CD8-positive, alpha-beta T cell (primary cell): ENCODE measurements at regions of chr14 and their contacts with region 1.

Region 1: DNA sequence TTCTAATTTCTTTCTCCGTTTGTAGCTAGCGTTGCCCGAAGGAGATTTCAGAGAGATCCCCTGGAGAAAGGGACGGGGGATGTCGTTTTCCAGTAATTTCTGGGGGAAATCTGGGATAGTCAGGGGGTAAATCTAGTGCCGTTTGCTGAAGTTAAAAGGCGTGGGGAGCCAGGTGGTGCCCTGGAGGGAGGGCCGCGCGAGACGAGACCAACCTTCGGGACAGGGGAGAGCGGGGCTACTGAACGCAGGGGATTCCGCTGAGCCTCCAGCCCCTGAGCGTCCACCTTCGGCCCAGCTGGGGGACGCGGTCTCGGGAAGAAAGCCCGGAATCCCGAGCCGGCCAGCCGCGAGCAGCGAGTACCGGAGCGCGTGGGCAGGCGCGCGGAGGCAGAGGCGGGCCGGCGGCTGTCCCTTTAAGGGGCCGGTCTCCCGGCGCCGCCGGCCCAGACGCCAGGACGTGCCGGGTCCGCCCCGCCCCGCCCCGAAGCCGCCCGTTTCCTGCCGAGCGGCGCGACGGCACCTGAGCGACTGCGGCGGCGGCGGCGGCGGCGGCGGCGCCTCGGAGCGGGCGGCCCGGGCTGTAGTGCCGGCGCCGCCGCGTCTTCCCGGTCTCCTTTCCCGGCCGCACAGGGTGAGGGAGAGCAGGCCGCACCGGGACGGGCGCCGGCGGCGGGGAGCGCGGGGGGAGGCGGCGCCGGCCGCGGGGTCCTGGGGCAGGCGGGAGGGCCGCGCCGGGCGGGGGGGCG is at the start of gene KTN1:
- DNase-seq: peak; percentile 68 to 92 (median 84)
- ATAC-seq: peak; percentile 86
- H3K4me3 ChIP-seq: peak within 1 kb of the TSS; percentile 89 to 95
- H3K4me3 Mint-ChIP-seq: peak within 1 kb of the TSS; percentile 96
- H3K27ac ChIP-seq: peak within 1 kb of the TSS; percentile 77
- H3K27ac Mint-ChIP-seq: peak within 1 kb of the TSS; percentile 95
- H3K4me1 ChIP-seq: peaks cover 41% of the 10 kb centered on the region
- H3K4me1 Mint-ChIP-seq: peaks cover 30% of the 10 kb centered on the region
- H3K27me3 ChIP-seq: no peaks in the 10 kb centered on the region
- H3K27me3 Mint-ChIP-seq: no peaks in the 10 kb centered on the region
- CTCF ChIP-seq: no peak
- total RNA-seq, gene KTN1: 64.2 to 74.5 TPM

Region 2: GRCh38 chr14:54488646-54489317 is 1091.1 kb before region 1 on chr14 and contains the start of gene GMFB:
- CTCF ChIA-PET with region 1: no interaction called
- POLR2A ChIA-PET with region 1: no interaction called
- intact Hi-C with region 1: loop called in 1 of 2 experiments (anchors 5 kb)
- DNase-seq: peak; percentile 77 to 94 (median 89)
- ATAC-seq: peak; percentile 96
- H3K4me3 ChIP-seq: peak within 1 kb of the TSS; percentile 73 to 92
- H3K4me3 Mint-ChIP-seq: peak within 1 kb of the TSS; percentile 90
- H3K27ac ChIP-seq: peak within 1 kb of the TSS; percentile 66 to 89
- H3K27ac Mint-ChIP-seq: peak within 1 kb of the TSS; percentile 94
- H3K4me1 ChIP-seq: peaks cover 38% of the 10 kb centered on the region
- H3K4me1 Mint-ChIP-seq: peaks cover 61% of the 10 kb centered on the region
- H3K27me3 ChIP-seq: no peaks in the 10 kb centered on the region
- H3K27me3 Mint-ChIP-seq: no peaks in the 10 kb centered on the region
- CTCF ChIP-seq: peak; percentile 17
- total RNA-seq, gene GMFB: 33.7 to 34.0 TPM

Region 3: GRCh38 chr14:55026793-55027561 is 552.9 kb before region 1 on chr14 and contains the starts of genes SOCS4 and WDHD1:
- CTCF ChIA-PET with region 1: no interaction called
- POLR2A ChIA-PET with region 1: no interaction called
- intact Hi-C with region 1: loop called (anchors 5 to 10 kb)
- DNase-seq: peak; percentile 87 to 97 (median 94)
- ATAC-seq: peak; percentile 86
- H3K4me3 ChIP-seq: peak within 1 kb of the TSS; percentile 71 to 91
- H3K4me3 Mint-ChIP-seq: peak within 1 kb of the TSS; percentile 95
- H3K27ac ChIP-seq: peak within 1 kb of the TSS; percentile 80 to 95
- H3K27ac Mint-ChIP-seq: peak within 1 kb of the TSS; percentile 95
- H3K4me1 ChIP-seq: peaks cover 37% of the 10 kb centered on the region
- H3K4me1 Mint-ChIP-seq: peaks cover 54% of the 10 kb centered on the region
- H3K27me3 ChIP-seq: no peaks in the 10 kb centered on the region
- H3K27me3 Mint-ChIP-seq: no peaks in the 10 kb centered on the region
- CTCF ChIP-seq: no peak
- total RNA-seq, gene SOCS4: 22.6 to 24.0 TPM
- total RNA-seq, gene WDHD1: 1.2 to 1.6 TPM

Region 4: GRCh38 chr14:55389330-55389729 is 190.6 kb before region 1 on chr14:
- CTCF ChIA-PET with region 1: no interaction called
- POLR2A ChIA-PET with region 1: no interaction called
- intact Hi-C with region 1: no loop called
- DNase-seq: no peak
- ATAC-seq: no peak
- H3K4me3 ChIP-seq: no peak overlapping the region
- H3K4me3 Mint-ChIP-seq: no peak overlapping the region
- H3K27ac ChIP-seq: no peak overlapping the region
- H3K27ac Mint-ChIP-seq: no peak overlapping the region
- H3K4me1 ChIP-seq: no peaks in the 10 kb centered on the region
- H3K4me1 Mint-ChIP-seq: peaks cover 11% of the 10 kb centered on the region
- H3K27me3 ChIP-seq: no peaks in the 10 kb centered on the region
- H3K27me3 Mint-ChIP-seq: no peaks in the 10 kb centered on the region
- CTCF ChIP-seq: no peak

Region 5: GRCh38 chr14:55411426-55412389 is 168.2 kb before region 1 on chr14 and contains the start of gene ATG14:
- CTCF ChIA-PET with region 1: no interaction called
- POLR2A ChIA-PET with region 1: no interaction called
- intact Hi-C with region 1: loop called in 1 of 2 experiments (anchors 2 kb)
- DNase-seq: peak; percentile 50 to 84 (median 68)
- ATAC-seq: peak; percentile 95
- H3K4me3 ChIP-seq: peak within 1 kb of the TSS; percentile 89 to 90
- H3K4me3 Mint-ChIP-seq: peak within 1 kb of the TSS; percentile 90
- H3K27ac ChIP-seq: peak within 1 kb of the TSS; percentile 54 to 67
- H3K27ac Mint-ChIP-seq: peak within 1 kb of the TSS; percentile 88
- H3K4me1 ChIP-seq: peaks cover 23% of the 10 kb centered on the region
- H3K4me1 Mint-ChIP-seq: peaks cover 44% of the 10 kb centered on the region
- H3K27me3 ChIP-seq: no peaks in the 10 kb centered on the region
- H3K27me3 Mint-ChIP-seq: no peaks in the 10 kb centered on the region
- CTCF ChIP-seq: no peak
- total RNA-seq, gene ATG14: 30.9 to 32.7 TPM

Region 6: GRCh38 chr14:56117765-56118610 is 538.1 kb after region 1 on chr14 and contains the start of gene PELI2:
- CTCF ChIA-PET with region 1: no interaction called
- POLR2A ChIA-PET with region 1: no interaction called
- intact Hi-C with region 1: loop called (anchors 2 kb)
- DNase-seq: peak; percentile 66 to 94 (median 82)
- ATAC-seq: peak; percentile 86
- H3K4me3 ChIP-seq: peak within 1 kb of the TSS; percentile 73 to 74
- H3K4me3 Mint-ChIP-seq: peak within 1 kb of the TSS; percentile 95
- H3K27ac ChIP-seq: peak within 1 kb of the TSS; percentile 67 to 92
- H3K27ac Mint-ChIP-seq: peak within 1 kb of the TSS; percentile 99
- H3K4me1 ChIP-seq: peaks cover 34% of the 10 kb centered on the region
- H3K4me1 Mint-ChIP-seq: peaks cover 49% of the 10 kb centered on the region
- H3K27me3 ChIP-seq: no peaks in the 10 kb centered on the region
- H3K27me3 Mint-ChIP-seq: peaks cover 4% of the 10 kb centered on the region
- CTCF ChIP-seq: no peak
- total RNA-seq, gene PELI2: 13.3 to 15.1 TPM

Region 7: DNA sequence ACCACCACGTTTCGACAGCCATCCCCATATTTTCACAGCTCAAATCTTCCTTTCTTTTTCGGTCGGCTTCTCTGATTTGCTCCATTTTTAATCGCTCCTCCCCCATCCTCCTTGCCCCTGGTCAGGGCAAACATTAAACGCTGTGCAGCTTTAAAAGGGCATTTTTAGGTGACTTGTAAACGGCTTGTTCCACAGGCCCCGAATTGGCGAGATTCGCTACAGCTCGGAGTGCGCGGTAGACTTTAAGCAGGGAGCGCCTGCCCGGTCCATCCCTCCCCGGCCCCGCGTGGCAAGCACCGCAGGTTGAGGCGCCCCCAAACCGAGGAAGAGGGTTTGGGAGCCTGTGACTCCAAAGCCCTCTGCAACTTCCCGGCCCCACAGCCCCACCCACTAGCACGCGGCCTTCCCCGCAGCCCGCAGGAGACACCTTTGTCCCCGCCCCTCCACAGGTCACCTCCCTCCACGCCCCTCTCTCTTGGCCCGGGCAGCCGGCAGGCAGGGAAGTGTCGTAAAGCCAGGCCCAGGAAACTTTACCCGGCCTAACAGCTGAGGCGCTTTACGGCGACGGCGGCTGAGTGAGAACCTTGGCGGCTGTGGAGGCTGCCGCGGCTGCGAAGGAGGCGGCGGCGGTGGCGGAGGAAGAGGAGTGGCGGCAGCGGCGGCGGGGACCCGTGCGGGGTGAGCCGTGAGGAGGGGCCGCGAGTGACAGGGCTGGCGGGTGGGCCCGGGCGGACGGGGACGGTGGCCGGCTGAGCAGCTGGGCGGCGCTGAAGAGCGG is 1810.3 kb after region 1 on chr14 and contains the start of gene NAA30:
- CTCF ChIA-PET with region 1: no interaction called
- POLR2A ChIA-PET with region 1: no interaction called
- intact Hi-C with region 1: loop called (anchors 5 kb)
- DNase-seq: peak; percentile 82 to 97 (median 92)
- ATAC-seq: peak; percentile 93
- H3K4me3 ChIP-seq: peak within 1 kb of the TSS; percentile 46 to 83
- H3K4me3 Mint-ChIP-seq: peak within 1 kb of the TSS; percentile 94
- H3K27ac ChIP-seq: peak within 1 kb of the TSS; percentile 48 to 82
- H3K27ac Mint-ChIP-seq: peak within 1 kb of the TSS; percentile 94
- H3K4me1 ChIP-seq: peaks cover 27% of the 10 kb centered on the region
- H3K4me1 Mint-ChIP-seq: peaks cover 42% of the 10 kb centered on the region
- H3K27me3 ChIP-seq: no peaks in the 10 kb centered on the region
- H3K27me3 Mint-ChIP-seq: no peaks in the 10 kb centered on the region
- CTCF ChIP-seq: no peak
- total RNA-seq, gene NAA30: 26.4 to 31.2 TPM